ENCODE measurements at regions of chr3 and their contacts with region 1.

Region 1: GRCh38 chr3:112979240-112979832 is 4.4 kb upstream of the CD200R1 start:
- DNase-seq: no peak
- H3K4me3 ChIP-seq: no peak overlapping the region
- H3K27ac ChIP-seq: no peak overlapping the region
- H3K4me1 ChIP-seq: peaks cover 2% of the 10 kb centered on the region
- H3K27me3 ChIP-seq: no peaks in the 10 kb centered on the region
- CTCF ChIP-seq: peak; percentile 87

Region 2: GRCh38 chr3:112199619-112200316 is 779.6 kb before region 1 on chr3:
- CTCF ChIA-PET with region 1: no interaction called
- POLR2A ChIA-PET with region 1: no interaction called
- intact Hi-C with region 1: no loop called
- DNase-seq: peak; percentile 23 to 79
- H3K4me3 ChIP-seq: no peak overlapping the region
- H3K27ac ChIP-seq: no peak overlapping the region
- H3K4me1 ChIP-seq: no peaks in the 10 kb centered on the region
- H3K27me3 ChIP-seq: no peaks in the 10 kb centered on the region
- CTCF ChIP-seq: peak; percentile 39; the same call in 1 of the 2 replicates

Region 3: GRCh38 chr3:112482675-112483074 is 496.7 kb before region 1 on chr3:
- CTCF ChIA-PET with region 1: no interaction called
- POLR2A ChIA-PET with region 1: no interaction called
- intact Hi-C with region 1: no loop called
- DNase-seq: no peak
- H3K4me3 ChIP-seq: no peak overlapping the region
- H3K27ac ChIP-seq: no peak overlapping the region
- H3K4me1 ChIP-seq: no peaks in the 10 kb centered on the region
- H3K27me3 ChIP-seq: no peaks in the 10 kb centered on the region
- CTCF ChIP-seq: no peak

Region 4: DNA sequence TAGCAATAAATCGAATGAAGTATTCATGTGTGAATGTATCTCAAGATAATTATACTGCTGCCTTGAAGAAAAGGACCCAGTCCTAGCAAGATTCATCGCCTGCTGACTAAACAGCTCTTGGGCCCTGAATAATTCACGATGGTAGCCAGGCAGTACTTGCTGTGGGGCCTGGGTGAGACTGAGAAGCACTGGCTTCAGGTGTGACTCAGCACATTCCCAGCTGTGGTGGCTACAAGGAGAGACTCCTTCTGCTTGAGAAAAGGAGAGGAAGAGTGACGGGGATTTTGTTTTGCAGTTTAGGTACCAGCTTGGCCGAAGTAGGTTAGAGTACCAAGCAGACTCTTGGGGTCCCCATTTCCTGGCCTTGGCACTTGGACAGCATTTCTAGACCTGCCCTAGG is 85.1 kb before region 1 on chr3:
- CTCF ChIA-PET with region 1: no interaction called
- POLR2A ChIA-PET with region 1: no interaction called
- intact Hi-C with region 1: no loop called
- DNase-seq: peak in 1 of 2 experiments; percentile 47
- H3K4me3 ChIP-seq: no peak overlapping the region
- H3K27ac ChIP-seq: no peak overlapping the region
- H3K4me1 ChIP-seq: 0 out of 2 replicates have a peak, but pooled peaks cover 8% of the 10 kb centered on the region
- H3K27me3 ChIP-seq: no peaks in the 10 kb centered on the region
- CTCF ChIP-seq: no peak

Region 5: GRCh38 chr3:113194823-113195401 is 215.6 kb after region 1 on chr3:
- CTCF ChIA-PET with region 1: no interaction called
- POLR2A ChIA-PET with region 1: interaction called, 12 read pairs
- intact Hi-C with region 1: no loop called
- DNase-seq: no peak
- H3K4me3 ChIP-seq: no peak overlapping the region
- H3K27ac ChIP-seq: no peak overlapping the region
- H3K4me1 ChIP-seq: no peaks in the 10 kb centered on the region
- H3K27me3 ChIP-seq: no peaks in the 10 kb centered on the region
- CTCF ChIP-seq: no peak

Measured in PC-9 (cell line).